Cardiac septum (tissue), 1 donor: ENCODE measurements at regions of chr5 and their contacts with region 1.

Region 1: DNA sequence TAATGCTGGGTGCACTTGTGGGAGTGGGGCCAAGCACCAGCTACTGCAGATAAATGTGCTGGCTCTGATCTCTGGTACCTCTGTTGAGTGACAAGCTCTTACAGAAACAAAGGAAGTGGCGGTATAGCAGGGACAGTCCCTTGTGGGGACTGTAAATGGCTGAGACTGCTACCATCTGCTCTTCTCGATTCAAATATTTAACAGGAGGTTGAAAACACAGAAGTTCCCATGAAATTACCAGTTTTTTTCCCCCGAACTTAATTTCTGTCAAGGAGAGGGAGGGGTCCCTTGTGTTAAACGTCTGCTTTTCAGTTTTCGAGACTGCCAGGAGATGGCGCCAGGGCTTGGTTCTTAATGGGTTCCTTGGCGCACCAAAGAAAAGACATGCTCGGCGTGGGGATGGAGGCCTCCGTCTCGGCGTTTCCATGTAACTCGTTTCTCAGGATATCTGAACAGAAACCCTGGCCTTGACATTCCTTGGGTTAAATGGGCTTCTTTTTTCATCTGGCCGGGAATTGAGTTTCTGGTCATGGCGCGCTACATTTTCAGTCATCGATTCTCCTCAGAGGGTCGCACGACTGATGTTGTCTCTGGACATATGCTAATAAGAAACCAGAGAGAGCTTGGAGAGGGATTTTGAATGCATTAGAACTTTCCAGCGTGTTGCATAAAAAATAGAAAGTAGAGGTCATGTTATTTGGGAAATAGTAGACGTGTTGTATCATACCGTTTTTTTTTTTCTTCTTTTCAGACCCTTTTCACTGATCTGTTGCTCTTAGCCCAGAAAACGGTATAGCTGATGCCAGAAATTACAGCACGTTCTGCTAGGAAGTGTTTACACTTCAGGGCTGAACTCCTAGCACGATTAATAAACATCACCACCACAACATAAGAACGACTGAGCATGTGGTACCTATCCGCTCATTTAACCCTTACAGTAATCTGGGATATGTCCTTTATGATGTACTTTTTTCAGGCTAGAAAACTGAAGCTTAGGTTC is 64.0 kb downstream of the CARTPT start:
- DNase-seq: peak; percentile 86

Region 2: DNA sequence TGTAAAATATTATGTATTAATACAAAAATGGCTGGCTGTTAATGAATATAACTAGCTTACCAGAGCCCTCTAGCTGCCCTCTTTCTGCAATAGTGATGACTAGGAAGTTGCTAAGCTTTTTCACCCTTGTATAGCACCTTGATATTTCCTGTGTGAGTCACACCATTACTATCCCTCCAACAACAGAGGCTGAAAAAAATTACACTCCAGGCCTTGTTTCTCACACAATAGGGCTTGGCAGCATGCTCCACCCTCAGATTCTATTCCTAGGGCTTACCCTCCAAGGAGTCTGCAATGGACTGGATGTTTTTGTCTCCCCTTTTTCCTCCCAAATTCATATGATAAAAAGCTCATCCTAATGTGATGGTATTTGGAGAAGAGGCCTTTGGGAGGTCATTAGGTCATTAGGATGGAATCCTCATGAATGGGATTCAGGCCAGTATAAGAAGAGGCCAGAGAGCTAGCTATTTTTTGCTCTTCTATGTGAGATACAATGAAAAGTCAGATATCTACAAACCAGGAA is 139.6 kb after region 1 on chr5:
- intact Hi-C with region 1: loop called (anchors 2 kb)
- DNase-seq: no peak

Region 3: DNA sequence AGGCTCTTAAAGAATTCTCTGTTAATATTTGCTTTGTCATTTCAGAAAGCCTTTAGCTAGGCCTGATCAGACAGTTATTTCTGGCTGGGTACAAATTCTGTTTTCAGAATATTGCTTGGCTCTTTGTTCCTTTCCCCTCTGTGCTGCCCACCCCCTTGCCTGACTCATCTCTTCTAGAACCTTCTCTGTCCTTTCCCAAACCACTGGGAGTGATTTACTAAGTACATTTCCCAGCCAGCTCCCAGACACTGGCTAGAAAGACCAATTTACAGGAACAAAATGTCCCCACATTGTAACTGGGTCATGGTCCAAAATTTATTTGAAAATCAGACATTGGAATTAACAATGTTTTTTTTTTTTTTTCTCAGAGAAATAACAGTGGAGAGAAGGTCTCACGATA is 191.1 kb after region 1 on chr5:
- intact Hi-C with region 1: loop called (anchors 5 kb)
- DNase-seq: no peak

Region 4: DNA sequence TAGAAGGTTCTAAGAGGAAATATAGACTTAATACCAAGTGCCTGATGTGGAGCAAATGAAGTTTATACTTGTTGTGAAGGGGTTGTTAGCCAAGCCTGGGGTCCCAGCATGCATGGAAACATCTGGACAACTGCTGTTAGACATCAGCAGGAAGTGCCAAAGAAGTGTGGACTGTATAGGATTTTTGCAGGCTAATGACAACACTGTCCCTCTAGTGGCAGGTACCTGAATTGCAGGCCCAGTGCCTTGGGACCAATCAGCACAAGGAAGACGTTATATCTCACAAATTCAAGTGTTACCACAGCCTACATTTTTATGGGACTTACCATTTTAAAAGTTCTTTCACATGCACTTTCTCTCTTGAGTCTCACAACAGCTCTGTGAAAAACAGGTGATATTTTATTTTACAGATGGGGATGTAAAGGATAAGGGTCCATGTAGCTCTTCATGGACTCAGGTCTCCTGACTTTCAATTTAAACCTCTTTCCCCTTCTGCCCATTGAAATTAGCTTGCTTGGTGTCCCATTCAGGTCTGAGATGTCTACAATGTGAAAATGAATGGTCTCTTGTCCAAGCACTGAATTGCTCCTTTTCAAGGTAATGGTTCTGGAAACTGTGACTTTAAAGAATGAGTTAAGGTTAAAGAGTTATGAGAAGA is 235.2 kb after region 1 on chr5:
- intact Hi-C with region 1: loop called (anchors 2 kb)
- DNase-seq: no peak

Region 5: GRCh38 chr5:72108202-72109061 is 325.4 kb after region 1 on chr5:
- intact Hi-C with region 1: loop called (anchors 2 kb)
- DNase-seq: peak; percentile 88

Region 6: DNA sequence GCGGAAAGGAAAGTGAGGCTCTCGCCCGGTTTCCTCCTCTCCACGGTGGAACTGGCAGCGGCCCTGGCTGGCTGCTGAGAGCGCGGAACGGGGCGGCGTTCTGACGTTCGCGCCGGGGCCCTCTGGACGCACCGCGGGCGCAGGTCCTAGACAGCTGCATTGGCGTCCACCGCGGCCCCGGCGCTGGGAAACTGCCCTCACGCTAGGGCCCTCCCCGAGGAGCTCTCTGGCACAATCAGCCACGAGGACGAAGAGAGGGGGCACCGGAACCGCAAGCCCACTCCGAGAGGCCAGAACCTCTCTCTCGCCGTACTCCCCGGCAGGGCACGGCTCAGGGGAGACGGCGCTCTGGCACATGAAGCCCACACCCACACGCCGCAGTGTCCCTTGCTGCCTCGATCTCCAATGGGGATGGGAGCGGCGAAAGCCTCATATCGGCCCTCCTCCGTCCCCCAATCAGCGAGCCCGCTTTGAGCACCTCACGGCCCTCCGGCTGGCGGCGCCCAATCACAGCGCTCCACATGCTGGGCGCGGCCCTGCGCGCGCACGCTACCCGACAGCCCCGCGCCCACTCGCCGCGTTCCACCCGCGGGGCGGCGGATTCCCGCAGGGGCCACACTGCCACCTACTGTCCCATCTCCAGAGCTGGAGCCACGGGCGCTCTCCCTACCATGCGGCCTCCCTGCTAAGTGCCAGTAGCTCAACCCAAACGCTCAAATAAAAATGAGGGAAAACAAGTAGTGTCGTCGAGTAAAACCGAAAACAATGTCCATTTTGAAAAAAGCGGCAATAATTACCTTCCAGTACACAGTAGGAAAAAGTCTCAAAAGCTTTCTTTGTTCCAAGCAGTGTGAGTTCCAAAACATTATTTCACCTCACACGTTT is 525.1 kb after region 1 on chr5:
- intact Hi-C with region 1: loop called (anchors 1 kb)
- DNase-seq: peak; percentile 99

Region 7: DNA sequence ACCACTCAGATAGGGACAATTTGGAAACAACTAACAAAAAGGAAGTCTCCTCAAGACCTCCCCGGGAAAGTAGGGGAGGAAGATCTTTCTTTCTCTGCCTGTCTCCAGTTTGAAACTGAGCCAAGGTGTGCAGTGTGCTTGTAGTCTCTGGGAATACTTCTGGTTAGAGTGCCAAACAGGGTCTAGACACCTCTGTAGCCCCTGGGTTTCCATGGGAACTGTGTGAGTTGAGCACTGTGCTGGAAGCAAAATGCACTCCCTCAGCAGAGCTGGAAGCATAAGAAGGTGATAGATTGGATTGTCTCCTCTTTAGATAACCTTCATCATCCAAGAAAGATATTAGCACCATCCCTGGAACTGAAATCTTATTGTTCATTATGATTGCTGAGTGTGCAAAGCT is 904.2 kb after region 1 on chr5:
- intact Hi-C with region 1: no loop called
- DNase-seq: no peak